Right ventricle myocardium inferior (tissue), 1 donor: ENCODE measurements at regions of chr1 and their contacts with region 1.

Region 1: DNA sequence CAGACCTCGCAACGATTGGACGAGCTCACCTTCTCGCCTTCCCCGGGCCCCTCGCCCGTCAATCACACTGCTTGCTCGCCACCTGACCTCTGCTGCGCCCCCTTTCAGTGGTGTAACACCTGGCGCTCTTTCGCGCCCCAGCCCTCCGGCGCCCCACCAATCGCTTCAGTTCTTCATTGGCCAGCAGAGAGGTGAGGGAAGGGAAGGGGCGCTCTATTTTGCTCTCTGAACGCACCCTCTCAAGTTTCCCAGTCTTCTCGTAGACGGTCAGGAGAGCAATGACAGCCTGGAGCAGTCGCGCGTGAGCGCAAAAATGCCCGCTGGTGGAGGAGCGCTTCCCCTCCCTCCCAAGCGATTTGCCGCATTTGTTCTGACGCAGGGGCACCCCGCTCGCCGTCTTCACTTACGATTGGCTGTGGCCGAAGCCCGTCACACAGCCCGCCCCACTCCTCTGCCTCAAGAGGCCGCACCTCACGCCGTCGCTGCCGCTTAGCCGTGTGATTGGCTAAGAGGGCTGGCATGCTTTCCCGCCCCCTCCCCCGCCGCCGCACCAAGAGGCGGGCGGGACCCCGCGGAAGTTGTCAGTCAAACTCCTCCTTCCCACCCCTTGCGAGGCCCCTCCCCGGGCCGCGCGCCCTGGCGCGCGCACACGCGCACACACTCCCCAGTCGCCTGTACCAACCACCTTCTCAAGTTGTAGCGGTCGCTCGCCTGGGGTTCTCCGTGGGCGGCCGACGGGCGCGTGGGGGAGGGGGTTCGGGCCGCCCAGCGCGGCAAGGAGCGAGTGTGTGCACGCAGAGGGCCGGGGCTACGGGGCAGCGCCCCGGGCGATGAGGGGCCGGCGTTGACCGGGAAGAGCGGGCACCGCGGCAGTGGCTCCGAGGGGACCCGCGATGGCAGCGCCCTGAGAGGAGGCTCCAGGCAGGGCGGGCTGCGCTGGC is at the start of gene PPP2R5A:
- DNase-seq: peak; percentile 100
- ATAC-seq: peak; percentile 98
- total RNA-seq, gene PPP2R5A: 80.8 TPM

Region 2: GRCh38 chr1:212119397-212119837 is 165.6 kb before region 1 on chr1:
- intact Hi-C with region 1: loop called (anchors 1 kb)
- DNase-seq: peak; percentile 71
- ATAC-seq: peak; percentile 94

Region 3: DNA sequence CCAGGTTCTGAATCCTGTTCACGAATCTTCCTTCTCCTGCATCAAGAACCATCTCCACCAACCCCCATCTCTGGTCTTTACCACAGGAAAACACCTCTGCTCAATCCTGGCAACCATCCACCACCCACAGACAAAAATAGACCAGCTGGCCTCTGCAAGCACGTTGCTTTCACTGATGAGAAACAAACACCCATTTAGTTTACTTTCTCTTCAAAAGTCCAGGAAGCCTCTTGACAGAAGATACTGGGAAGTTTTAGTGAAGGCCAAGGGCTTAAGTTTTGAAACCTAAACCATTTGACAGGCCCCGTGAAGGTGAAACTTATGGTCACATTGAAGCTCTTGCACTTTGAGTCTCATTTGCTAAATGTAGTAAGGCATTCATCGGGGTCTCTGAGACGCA is 122.4 kb before region 1 on chr1:
- intact Hi-C with region 1: loop called (anchors 2 kb)
- DNase-seq: no peak
- ATAC-seq: peak; percentile 53

Region 4: DNA sequence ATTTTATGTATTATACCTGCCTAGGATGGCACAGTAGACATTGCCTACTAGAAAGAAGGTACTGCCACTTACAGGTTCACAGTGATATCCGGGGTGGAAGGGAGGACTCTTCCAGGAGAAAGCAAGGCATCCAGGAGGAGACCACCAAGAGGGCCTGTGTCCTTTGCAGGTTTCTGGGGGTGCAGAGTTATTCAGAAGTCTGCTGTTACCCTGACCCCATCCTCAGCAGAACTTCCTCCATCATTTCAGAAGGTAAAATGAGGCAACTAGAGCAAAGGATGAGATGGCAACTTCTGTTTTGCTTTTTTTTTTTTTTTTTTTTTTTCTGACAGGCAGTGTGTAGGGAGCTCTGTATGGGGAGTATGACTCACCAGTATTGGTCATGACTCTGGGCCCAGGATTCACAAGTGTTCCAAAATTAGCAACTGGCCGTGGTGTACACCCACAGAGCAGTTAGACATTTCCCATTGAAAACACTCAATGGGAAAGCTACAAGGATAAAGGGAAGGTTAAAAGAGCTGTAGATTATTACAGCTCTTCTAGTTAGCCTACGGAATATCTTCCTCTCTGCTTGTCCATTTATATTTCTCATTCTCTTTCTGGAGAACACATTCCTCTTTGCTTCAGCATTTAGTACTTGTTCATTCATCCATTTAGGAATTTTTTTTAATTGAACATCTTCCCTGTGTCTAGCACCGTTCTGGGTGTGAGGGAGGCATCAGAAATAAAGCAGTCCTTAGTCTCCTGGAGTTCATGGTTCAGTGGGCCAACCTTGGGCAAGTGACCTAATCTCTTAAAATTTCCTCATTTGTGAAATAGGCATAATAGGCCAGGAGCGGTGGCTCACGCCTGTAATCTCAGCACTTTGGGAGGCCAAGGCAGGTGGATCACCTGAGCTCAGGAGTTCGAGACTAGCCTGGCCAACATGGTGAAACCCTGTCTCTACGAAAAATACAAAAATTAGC is 50.3 kb before region 1 on chr1:
- intact Hi-C with region 1: loop called (anchors 2 kb)
- DNase-seq: no peak
- ATAC-seq: peak; percentile 96

Region 5: DNA sequence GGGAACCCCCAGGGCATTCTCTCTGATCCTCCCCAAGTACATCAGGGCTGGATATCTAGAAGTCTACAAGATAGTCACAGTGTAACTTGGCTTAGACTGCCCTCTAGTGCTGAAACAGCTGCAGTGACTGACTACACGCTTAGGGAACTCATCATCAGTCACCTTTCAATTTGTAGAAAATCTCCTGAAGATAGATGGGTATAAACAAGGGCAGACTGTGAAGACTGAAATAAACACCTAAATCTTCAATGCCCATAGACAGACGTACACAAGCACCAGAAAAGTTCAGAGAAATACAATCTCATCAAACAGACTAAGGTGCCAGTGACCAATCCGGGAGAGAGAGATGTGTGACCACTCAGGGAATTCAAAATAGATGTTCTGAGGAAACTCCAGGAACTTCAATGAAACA is 83.1 kb after region 1 on chr1:
- intact Hi-C with region 1: loop called (anchors 5 kb)
- DNase-seq: no peak
- ATAC-seq: peak; percentile 76